ENCODE measurements at regions of chr1 and their contacts with region 1.

Region 1: DNA sequence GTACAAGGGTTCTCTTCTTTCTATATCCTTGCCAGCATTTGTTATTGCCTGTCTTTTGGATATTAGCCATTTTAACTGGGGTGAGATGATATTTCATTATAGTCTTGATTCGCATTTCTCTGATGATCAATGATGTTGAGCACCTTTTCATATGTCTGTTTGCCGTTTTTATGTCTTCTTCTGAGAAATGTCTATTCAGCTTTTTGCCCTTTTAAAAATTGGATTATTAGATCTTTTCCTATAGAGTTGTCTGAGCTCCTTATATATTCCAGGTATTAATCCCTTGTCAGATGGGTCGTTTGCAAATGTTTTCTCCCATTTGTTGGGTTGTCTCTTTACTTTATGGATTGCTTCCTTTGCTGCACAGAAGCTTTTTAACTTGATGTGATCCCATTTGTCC is 19.4 kb upstream of the MRPS14 start:
- DNase-seq: no peak
- ATAC-seq: no peak
- H3K4me3 ChIP-seq: no peak overlapping the region
- H3K4me3 Mint-ChIP-seq: no peak overlapping the region
- H3K27ac ChIP-seq: no peak overlapping the region
- H3K27ac Mint-ChIP-seq: no peak overlapping the region
- H3K4me1 ChIP-seq: no peaks in the 10 kb centered on the region
- H3K4me1 Mint-ChIP-seq: no peaks in the 10 kb centered on the region
- H3K27me3 ChIP-seq: peaks cover 0 to 11% of the 10 kb centered on the region in 2 experiments
- H3K27me3 Mint-ChIP-seq: peaks cover 8 to 23% of the 10 kb centered on the region in 2 donors

Region 2: DNA sequence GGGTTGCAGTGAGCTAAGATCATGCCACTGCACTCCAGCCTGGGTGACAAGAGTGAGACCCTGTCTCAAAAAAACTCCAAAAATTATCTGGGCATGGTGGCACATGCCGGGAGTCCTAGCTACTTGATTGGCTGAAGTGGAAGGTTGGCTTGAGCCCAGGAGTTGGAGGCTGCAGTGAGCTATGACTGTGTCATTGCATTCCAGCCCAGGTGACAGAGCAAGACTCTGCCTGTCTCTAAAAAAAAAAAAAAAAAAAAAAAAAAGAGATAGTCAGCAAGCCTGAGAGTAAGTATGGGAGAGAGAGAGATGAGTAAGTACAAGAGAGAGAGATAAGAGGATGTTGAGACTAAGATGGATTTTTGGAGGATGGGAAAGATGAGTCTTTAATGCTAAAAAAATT is 223.7 kb before region 1 on chr1:
- CTCF ChIA-PET with region 1: no interaction called
- POLR2A ChIA-PET with region 1: interaction called in 1 of 2 experiments, 20 read pairs
- DNase-seq: no peak
- ATAC-seq: no peak
- H3K4me3 ChIP-seq: no peak overlapping the region
- H3K4me3 Mint-ChIP-seq: no peak overlapping the region
- H3K27ac ChIP-seq: no peak overlapping the region
- H3K27ac Mint-ChIP-seq: no peak overlapping the region
- H3K4me1 ChIP-seq: no peaks in the 10 kb centered on the region
- H3K4me1 Mint-ChIP-seq: peaks cover 0 to 8% (median 3%) of the 10 kb centered on the region in 3 donors
- H3K27me3 ChIP-seq: no peaks in the 10 kb centered on the region
- H3K27me3 Mint-ChIP-seq: no peaks in the 10 kb centered on the region